Transverse colon (tissue), 4 donors: ENCODE measurements at regions of chr4 and their contacts with region 1.

Region 1: DNA sequence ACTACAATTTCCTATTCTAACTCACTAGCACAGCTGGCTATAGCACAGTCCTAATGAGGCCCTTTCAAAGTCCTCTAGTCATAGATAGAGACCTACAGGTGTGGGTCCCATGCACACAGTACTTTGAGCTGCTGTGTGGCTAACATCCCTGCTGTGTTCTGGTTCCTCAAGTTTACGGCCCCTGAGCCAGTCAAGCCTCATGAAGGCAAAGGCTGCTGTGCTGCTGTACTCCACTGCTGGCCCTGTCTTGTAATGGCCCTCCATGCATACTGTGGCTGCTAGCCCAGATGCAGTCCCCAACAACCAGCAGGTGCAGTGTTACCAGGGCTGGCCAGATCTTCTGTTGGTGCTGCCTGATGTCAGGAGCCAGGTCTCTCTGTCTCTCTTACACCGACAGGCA is 23.4 kb upstream of the ENPEP start:
- DNase-seq: no peak
- H3K4me3 ChIP-seq: no peak overlapping the region
- H3K27ac ChIP-seq: no peak overlapping the region
- H3K4me1 ChIP-seq: peaks cover 0 to 23% (median 3%) of the 10 kb centered on the region in 4 donors
- H3K27me3 ChIP-seq: peaks cover 8% of the 10 kb centered on the region
- CTCF ChIP-seq: no peak
- EP300 ChIP-seq: no peak
- POLR2A ChIP-seq: no peak

Region 2: DNA sequence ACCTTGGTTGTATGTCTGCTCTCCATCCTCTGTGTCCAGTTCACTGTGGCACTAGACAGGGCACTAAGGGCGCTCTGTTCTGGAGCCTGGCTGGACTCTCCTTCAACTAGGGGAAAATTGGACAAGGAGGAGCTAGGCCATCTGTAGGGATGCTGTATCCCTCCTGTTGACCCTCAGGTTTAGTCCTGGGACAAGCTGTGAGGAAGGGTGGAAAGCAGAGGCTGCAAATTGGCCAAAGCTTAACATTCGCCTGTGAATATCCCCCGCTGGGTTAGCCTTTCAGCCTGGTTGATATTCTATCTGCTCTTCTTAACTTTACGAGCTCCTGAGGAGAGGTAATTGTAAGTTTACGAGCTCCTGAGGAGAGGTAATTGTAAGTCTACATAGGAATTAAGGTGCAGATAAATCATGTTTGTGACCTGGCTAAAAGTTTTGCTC is 41.0 kb before region 1 on chr4:
- in situ Hi-C with region 1: no loop called
- intact Hi-C with region 1: loop called (anchors 1 kb)
- DNase-seq: peak; percentile 24
- H3K4me3 ChIP-seq: peak overlapping the region in 1 of 4 donors; percentile 12
- H3K27ac ChIP-seq: peak overlapping the region; percentile 48 to 81 (median 66)
- H3K4me1 ChIP-seq: peaks cover 0 to 20% (median 10%) of the 10 kb centered on the region in 4 donors
- H3K27me3 ChIP-seq: no peaks in the 10 kb centered on the region
- CTCF ChIP-seq: no peak
- EP300 ChIP-seq: no peak
- POLR2A ChIP-seq: no peak